ENCODE measurements at regions of chr17 and their contacts with region 1.

Region 1: GRCh38 chr17:74493381-74493833 is 27.0 kb downstream of the CD300A start:
- DNase-seq: peak; percentile 28
- ATAC-seq: peak; percentile 92
- H3K4me3 ChIP-seq: no peak overlapping the region
- H3K27ac ChIP-seq: no peak overlapping the region
- H3K4me1 ChIP-seq: no peaks in the 10 kb centered on the region
- H3K27me3 ChIP-seq: no peaks in the 10 kb centered on the region
- CTCF ChIP-seq: peak; percentile 93 to 95 (median 94); a peak in 5 of 6 replicates
- EP300 ChIP-seq: no peak
- POLR2A ChIP-seq: no peak
- RAD21 ChIP-seq: peak; percentile 98

Region 2: GRCh38 chr17:74513987-74514631 is 20.7 kb after region 1 on chr17:
- CTCF ChIA-PET with region 1: interaction called, 8 read pairs
- POLR2A ChIA-PET with region 1: no interaction called
- RAD21 ChIA-PET with region 1: interaction called, 3 read pairs
- SMC1A ChIA-PET with region 1: interaction called, 16 read pairs
- in situ Hi-C with region 1: no loop called
- intact Hi-C with region 1: no loop called
- DNase-seq: peak; percentile 73
- ATAC-seq: no peak
- H3K4me3 ChIP-seq: no peak overlapping the region
- H3K27ac ChIP-seq: no peak overlapping the region
- H3K4me1 ChIP-seq: 0 out of 2 replicates have a peak, but pooled peaks cover 7% of the 10 kb centered on the region
- H3K27me3 ChIP-seq: no peaks in the 10 kb centered on the region
- CTCF ChIP-seq: no peak
- EP300 ChIP-seq: no peak; a peak in 2 of 4 replicates
- POLR2A ChIP-seq: no peak
- RAD21 ChIP-seq: no peak